ENCODE measurements at regions of chr15 and their contacts with region 1.

Region 1: GRCh38 chr15:42495361-42496212 is at the start of gene SNAP23:
- DNase-seq: peak; percentile 96
- H3K4me3 Mint-ChIP-seq: peak within 1 kb of the TSS; percentile 97
- H3K27ac Mint-ChIP-seq: peak within 1 kb of the TSS; percentile 95
- H3K4me1 Mint-ChIP-seq: peaks cover 62% of the 10 kb centered on the region
- H3K27me3 Mint-ChIP-seq: no peaks in the 10 kb centered on the region
- total RNA-seq, gene SNAP23: 74.0 and 84.5 TPM in 2 replicates

Region 2: DNA sequence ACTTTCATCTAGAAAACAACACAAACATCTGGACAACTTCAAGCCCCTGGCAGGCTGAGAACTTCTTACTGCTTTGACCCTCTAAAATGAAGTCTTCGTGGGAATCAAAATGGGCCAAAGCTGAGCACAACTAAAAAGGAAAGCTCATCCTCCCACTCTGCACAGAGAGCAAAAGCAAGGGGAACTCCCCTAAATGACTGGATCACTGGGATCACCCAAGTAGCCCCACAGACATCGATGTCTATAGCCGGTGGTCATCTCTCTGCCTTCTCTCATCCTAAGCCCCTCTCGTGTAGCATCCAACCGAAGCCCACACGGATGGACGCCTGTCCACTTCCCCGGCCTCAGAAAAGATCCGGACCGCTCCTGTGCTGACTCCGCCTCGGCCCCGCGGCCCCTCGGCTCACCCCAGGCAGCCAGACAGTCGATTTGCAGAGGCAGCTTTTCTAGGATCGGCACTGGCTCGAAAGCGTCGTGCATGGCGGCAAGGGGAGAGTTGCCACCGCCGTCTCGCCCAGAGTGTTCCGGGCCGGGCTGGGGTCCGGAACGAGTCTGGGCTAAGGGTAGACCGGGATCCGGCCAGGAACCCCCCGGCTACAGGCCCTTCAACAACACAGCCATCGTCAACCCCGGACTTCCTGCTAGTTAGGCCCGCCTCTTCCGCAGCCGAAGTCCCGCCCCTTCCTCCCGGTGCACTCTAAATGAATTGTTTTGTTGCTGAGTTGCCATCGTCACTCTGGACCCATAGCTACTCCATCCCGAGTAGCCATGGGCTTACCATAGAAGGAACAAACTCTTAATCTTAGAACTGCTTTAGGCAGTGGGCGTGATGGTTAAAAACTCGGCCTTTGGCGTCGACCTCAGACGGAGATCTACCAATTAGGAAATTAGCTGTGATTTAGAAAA is 287.7 kb before region 1 on chr15 and contains the start of gene VPS39:
- intact Hi-C with region 1: loop called (anchors 10 kb)
- DNase-seq: peak; percentile 96
- H3K4me3 Mint-ChIP-seq: peak within 1 kb of the TSS; percentile 98
- H3K27ac Mint-ChIP-seq: peak within 1 kb of the TSS; percentile 98
- H3K4me1 Mint-ChIP-seq: peaks cover 28% of the 10 kb centered on the region
- H3K27me3 Mint-ChIP-seq: no peaks in the 10 kb centered on the region
- total RNA-seq, gene VPS39: 58.0 TPM in 2 replicates

Region 3: DNA sequence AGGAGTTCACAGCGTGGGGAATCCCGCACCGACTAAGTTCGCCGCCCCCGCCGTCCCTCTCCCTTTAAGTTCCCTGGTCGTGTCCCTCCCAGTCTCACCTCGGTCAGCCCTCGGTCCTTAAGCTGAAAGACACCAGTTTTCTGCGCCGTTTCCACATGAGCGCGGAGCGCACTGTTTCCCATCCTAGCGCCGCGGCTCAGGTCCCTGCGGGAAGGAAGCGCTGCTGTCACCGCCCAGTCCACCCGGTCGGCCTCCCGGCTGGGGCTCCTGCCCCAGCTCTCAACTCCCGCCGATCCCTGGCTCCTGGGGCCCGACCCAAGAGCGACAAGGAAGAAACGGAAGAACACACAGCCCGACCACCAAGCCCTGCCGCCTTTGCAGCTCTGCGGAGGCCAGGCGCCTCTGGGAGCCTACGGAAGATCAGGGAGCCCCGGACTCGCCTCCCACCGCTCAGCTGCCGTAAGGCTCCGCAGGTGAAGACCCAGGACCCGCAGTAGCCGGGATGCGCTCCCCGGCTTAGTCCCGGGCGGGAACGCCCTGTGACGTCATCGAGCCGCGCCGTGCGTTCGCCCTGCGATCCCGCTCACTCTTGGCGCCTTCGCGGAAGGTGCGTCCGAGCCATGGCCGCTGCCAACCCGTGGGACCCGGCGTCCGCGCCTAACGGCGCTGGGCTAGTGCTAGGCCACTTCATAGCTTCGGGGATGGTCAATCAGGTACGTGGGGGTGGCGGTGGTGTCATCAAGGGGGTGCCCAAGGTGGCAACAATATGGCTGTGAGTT is 52.9 kb after region 1 on chr15 and contains the starts of genes HAUS2 and LRRC57:
- intact Hi-C with region 1: loop called (anchors 1 kb)
- DNase-seq: peak; percentile 97
- H3K4me3 Mint-ChIP-seq: peak within 1 kb of the TSS; percentile 96
- H3K27ac Mint-ChIP-seq: peak within 1 kb of the TSS; percentile 95
- H3K4me1 Mint-ChIP-seq: peaks cover 46% of the 10 kb centered on the region
- H3K27me3 Mint-ChIP-seq: no peaks in the 10 kb centered on the region
- total RNA-seq, gene HAUS2: 41.1 and 48.0 TPM in 2 replicates
- total RNA-seq, gene LRRC57: 19.0 and 21.1 TPM in 2 replicates